PC-3 (cell line): ENCODE measurements at regions of chr14 and their contacts with region 1.

Region 1: GRCh38 chr14:105300792-105301533 is at the start of gene BRF1:
- DNase-seq: peak; percentile 95
- ATAC-seq: peak; percentile 88
- H3K4me3 ChIP-seq: peak within 1 kb of the TSS; percentile 92
- H3K27ac ChIP-seq: peak within 1 kb of the TSS; percentile 71
- H3K4me1 ChIP-seq: no peaks in the 10 kb centered on the region
- H3K27me3 ChIP-seq: no peaks in the 10 kb centered on the region
- CTCF ChIP-seq: no peak
- total RNA-seq, gene BRF1: 55.8 and 86.1 TPM in 2 replicates

Region 2: DNA sequence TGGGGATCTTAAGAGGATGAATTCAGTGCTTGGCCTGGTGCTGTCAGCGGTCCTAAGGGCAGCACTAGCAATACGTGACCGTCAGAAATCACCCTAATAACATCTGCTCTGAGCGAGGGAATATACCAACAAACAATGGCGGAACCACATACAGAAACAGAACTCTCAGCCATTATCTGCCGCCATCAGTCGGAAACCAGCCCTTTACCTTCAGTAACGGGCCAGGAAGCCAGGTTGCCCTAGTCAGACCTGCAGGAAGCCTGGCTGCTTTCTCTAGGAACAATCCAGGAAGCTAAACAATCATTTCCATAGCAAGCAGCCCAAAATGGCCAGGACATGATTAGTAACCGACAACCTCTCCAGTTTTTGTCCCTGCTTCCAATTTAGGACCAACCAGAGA is 285.7 kb before region 1 on chr14:
- CTCF ChIA-PET with region 1: interaction called, 10 read pairs
- POLR2A ChIA-PET with region 1: no interaction called
- intact Hi-C with region 1: no loop called
- DNase-seq: no peak
- ATAC-seq: no peak
- H3K4me3 ChIP-seq: peak overlapping the region; percentile 15; the same call in 1 of the 2 replicates
- H3K27ac ChIP-seq: no peak overlapping the region
- H3K4me1 ChIP-seq: peaks cover 46% of the 10 kb centered on the region
- H3K27me3 ChIP-seq: no peaks in the 10 kb centered on the region
- CTCF ChIP-seq: no peak

Region 3: GRCh38 chr14:105314287-105315200 is 13.6 kb after region 1 on chr14 and contains the start of gene PACS2:
- CTCF ChIA-PET with region 1: no interaction called
- POLR2A ChIA-PET with region 1: interaction called, 4 read pairs
- intact Hi-C with region 1: loop called (anchors 2 kb)
- DNase-seq: peak; percentile 88
- ATAC-seq: peak; percentile 54
- H3K4me3 ChIP-seq: peak within 1 kb of the TSS; percentile 87
- H3K27ac ChIP-seq: no peak within 1 kb of the TSS
- H3K4me1 ChIP-seq: peaks cover 23% of the 10 kb centered on the region; the same call in 1 of the 2 replicates
- H3K27me3 ChIP-seq: no peaks in the 10 kb centered on the region
- CTCF ChIP-seq: no peak
- total RNA-seq, gene PACS2: 56.0 and 62.0 TPM in 2 replicates